ENCODE measurements at regions of chr2 and their contacts with region 1.

Region 1: DNA sequence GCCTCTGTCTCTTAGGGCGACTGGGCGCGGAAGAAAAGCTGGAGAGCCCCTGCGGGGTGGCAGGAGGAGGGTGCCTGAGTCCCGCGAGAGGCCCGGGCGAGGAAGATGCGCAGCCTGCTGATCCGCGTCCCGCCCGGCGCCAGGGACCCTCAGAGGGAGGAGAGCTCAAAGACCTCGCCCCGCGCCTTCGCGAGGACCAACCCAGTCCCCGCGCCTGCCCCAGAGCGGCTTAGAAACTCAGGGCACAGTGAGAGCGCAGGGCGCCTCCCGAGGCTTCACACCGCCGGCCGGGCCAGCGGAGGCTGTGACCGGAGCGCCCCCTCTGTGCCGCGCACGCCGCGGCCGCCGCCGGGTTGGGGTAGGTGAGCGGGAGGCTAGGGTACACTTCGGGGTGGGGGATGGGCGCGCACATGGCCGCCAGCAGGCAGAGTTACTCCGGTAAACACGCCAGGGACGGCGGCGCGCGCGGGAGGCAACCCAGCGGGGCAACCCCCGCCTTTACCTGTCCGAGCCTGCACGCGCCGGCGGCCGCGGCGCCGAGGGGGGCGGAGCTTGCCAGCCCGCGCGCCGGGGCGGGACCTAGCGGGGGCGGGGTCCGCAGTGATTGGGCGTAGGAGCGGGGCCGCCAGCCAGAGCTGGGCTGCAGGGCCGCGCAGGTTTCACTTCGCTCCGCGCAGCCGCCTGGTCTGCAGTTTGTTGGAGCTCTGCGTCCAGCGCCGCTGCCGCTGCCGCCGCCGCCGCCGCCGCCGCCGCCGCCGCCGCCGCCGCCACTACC is at the start of gene BCL2L11:
- DNase-seq: peak; percentile 98
- ATAC-seq: peak; percentile 74
- H3K4me3 Mint-ChIP-seq: peak within 1 kb of the TSS; percentile 97
- H3K27ac Mint-ChIP-seq: peak within 1 kb of the TSS; percentile 89
- H3K4me1 Mint-ChIP-seq: peaks cover 50% of the 10 kb centered on the region
- H3K27me3 Mint-ChIP-seq: peaks cover 5% of the 10 kb centered on the region
- CTCF ChIP-seq: no peak
- total RNA-seq, gene BCL2L11: 205 and 221 TPM in 2 replicates

Region 2: GRCh38 chr2:110853507-110853906 is 266.9 kb before region 1 on chr2:
- CTCF ChIA-PET with region 1: no interaction called
- POLR2A ChIA-PET with region 1: interaction called, 7 read pairs
- intact Hi-C with region 1: loop called (anchors 5 kb)
- DNase-seq: no peak
- ATAC-seq: peak; percentile 27
- H3K4me3 Mint-ChIP-seq: no peak overlapping the region
- H3K27ac Mint-ChIP-seq: no peak overlapping the region
- H3K4me1 Mint-ChIP-seq: peaks cover 34% of the 10 kb centered on the region
- H3K27me3 Mint-ChIP-seq: no peaks in the 10 kb centered on the region
- CTCF ChIP-seq: no peak

Region 3: DNA sequence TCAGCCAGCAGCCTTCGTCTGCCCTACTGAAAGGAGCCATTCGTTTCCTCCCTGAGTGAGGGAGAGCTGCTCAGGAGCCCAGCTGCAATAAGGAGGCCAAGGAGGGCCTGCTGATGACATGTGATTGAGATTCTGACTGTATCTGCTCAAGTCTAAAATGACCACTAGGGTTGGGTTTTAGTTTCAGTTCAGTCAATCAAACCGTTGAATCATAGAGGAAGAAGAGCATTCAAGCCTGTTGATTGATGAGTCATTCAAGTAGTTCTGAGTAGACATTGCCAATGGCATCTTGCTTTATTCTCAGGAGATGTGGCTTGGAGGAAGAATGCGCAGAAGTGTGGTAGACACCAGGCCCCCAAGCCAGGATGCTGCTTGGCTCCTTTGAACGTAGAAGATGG is 19.7 kb before region 1 on chr2:
- CTCF ChIA-PET with region 1: no interaction called
- POLR2A ChIA-PET with region 1: interaction called, 4 read pairs
- intact Hi-C with region 1: loop called (anchors 2 kb)
- DNase-seq: no peak
- ATAC-seq: peak; percentile 90
- H3K4me3 Mint-ChIP-seq: no peak overlapping the region
- H3K27ac Mint-ChIP-seq: no peak overlapping the region
- H3K4me1 Mint-ChIP-seq: peaks cover 10% of the 10 kb centered on the region
- H3K27me3 Mint-ChIP-seq: no peaks in the 10 kb centered on the region
- CTCF ChIP-seq: no peak

Region 4: GRCh38 chr2:111157798-111158197 is 37.4 kb after region 1 on chr2:
- CTCF ChIA-PET with region 1: interaction called, 15 read pairs
- POLR2A ChIA-PET with region 1: interaction called, 136 read pairs
- intact Hi-C with region 1: loop called (anchors 1 kb)
- DNase-seq: no peak
- ATAC-seq: peak; percentile 65
- H3K4me3 Mint-ChIP-seq: peak overlapping the region; percentile 73
- H3K27ac Mint-ChIP-seq: peak overlapping the region; percentile 95
- H3K4me1 Mint-ChIP-seq: peaks cover 71% of the 10 kb centered on the region
- H3K27me3 Mint-ChIP-seq: no peaks in the 10 kb centered on the region
- CTCF ChIP-seq: no peak

Region 5: DNA sequence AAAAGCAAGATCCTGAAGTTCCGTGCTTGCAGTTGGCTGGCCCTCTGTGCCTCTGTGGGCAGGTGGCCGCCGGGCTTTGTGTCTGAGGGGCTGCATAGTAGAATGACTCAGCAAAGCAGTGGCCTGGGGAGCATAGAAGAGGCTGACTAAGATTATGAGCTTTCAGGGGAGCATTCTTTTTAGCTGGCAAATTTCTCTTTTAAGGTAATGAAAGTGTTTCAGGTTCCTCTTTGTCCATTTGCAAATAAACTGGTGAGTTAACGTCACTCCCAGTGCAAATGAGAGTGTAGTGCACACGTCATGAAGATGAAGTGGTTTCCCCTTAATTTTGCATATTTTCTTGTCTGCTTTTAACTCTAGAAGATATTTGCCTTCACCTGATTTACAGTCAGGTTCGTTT is 98.8 kb after region 1 on chr2:
- CTCF ChIA-PET with region 1: interaction called, 4 read pairs
- POLR2A ChIA-PET with region 1: interaction called, 42 read pairs
- intact Hi-C with region 1: loop called (anchors 1 kb)
- DNase-seq: peak; percentile 41
- ATAC-seq: peak; percentile 70
- H3K4me3 Mint-ChIP-seq: peak overlapping the region; percentile 52
- H3K27ac Mint-ChIP-seq: peak overlapping the region; percentile 95
- H3K4me1 Mint-ChIP-seq: peaks cover 50% of the 10 kb centered on the region
- H3K27me3 Mint-ChIP-seq: no peaks in the 10 kb centered on the region
- CTCF ChIP-seq: no peak

Region 6: GRCh38 chr2:112054847-112055729 is 934.6 kb after region 1 on chr2 and contains the start of gene TMEM87B:
- CTCF ChIA-PET with region 1: no interaction called
- POLR2A ChIA-PET with region 1: no interaction called
- intact Hi-C with region 1: loop called (anchors 2 kb)
- DNase-seq: peak; percentile 87
- ATAC-seq: peak; percentile 72
- H3K4me3 Mint-ChIP-seq: peak within 1 kb of the TSS; percentile 96
- H3K27ac Mint-ChIP-seq: peak within 1 kb of the TSS; percentile 97
- H3K4me1 Mint-ChIP-seq: peaks cover 39% of the 10 kb centered on the region
- H3K27me3 Mint-ChIP-seq: no peaks in the 10 kb centered on the region
- CTCF ChIP-seq: no peak
- total RNA-seq, gene TMEM87B: 19.8 and 20.0 TPM in 2 replicates